Mucosa of descending colon (tissue), 3 donors: ENCODE measurements at regions of chr20 and their contacts with region 1.

Region 1: DNA sequence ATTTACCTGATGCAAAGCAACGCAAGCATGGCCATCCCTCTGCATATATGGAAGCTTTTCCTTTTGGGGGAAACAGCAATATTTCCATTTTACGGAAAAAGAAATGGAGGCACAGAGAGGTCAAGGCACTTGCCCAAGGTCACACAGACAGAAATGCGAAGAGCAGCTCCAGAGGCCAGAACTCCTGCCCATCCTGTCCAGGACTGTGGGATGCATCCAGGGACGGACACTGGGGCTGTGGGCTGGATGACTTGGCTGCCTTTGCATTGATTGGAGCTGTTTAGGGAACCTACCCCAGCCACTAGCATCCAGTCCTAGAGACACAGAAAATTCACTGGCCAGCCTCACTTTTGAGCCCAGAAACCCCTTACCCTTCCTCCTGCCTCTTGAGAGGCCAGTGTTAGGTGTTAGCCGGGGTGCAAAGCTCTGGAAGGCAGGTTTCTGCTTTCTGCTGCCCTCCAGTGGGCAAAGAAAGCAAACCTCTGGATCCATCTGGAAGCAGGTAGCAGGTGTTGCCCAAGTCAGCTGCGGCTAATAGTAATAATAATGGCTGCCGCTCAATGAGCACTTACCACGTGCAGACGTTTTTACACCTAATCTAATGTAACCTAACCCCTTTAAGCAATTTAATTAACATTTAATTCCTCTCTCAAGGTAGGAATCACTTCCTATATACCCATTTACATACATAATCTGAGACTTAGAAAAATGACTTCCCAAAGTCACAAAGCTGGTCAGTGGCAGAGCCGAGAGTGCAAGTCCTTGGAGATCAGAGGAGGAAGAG is 31.7 kb upstream of the CCN5 start:
- DNase-seq: peak in 2 of 3 donors; percentile 62 to 82
- ATAC-seq: peak; percentile 81
- H3K4me3 ChIP-seq: no peak overlapping the region
- H3K4me1 ChIP-seq: no peaks in the 10 kb centered on the region
- CTCF ChIP-seq: peak; percentile 68

Region 2: GRCh38 chr20:44733341-44734069 is 50.0 kb after region 1 on chr20:
- intact Hi-C with region 1: loop called (anchors 2 to 5 kb)
- DNase-seq: peak in 2 of 3 donors; percentile 72 to 76
- ATAC-seq: peak; percentile 62
- H3K4me3 ChIP-seq: no peak overlapping the region
- H3K4me1 ChIP-seq: no peaks in the 10 kb centered on the region
- CTCF ChIP-seq: peak; percentile 48

Region 3: DNA sequence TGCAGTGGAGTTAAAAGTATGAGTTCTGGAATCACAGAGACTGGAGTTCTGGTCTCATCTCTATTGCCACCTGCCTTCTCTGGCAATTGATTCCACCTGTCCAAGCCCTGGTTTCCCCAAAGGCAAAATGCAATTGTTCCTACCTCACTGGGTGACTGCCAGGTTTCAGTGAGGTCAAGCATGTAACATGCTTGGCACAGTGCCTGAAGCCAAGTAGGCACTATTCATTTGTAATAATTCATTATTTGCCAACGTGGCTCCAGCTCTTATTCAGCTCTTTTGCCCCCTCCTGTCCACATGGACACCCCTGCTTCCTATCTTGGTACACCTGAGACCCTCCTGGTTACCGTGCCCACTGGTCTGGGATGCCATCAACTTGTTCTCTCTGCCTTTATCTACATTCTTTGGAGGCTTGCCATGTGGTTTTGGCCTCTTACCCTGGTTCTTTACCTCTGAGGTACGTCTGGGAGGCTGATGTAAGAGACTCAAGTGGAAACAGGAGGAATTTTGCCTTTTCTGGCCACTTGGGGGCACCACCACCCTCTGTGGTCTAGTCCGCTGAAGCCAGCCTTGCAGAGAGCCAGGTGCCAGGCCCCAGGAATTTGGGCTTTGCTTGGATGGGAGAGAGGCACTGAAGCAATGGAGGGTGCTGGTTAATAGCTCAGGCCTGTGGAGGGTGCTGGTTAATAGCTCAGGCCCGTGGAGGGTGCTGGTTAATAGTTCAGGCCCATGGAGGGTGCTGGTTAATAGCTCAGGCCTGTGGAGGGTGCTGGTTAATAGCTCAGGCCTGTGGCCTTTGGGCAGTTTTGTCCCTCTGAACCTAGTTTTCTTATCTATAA is 63.9 kb after region 1 on chr20:
- intact Hi-C with region 1: no loop called
- DNase-seq: peak in 2 of 3 donors; percentile 75 to 92
- ATAC-seq: peak; percentile 82
- H3K4me3 ChIP-seq: no peak overlapping the region
- H3K4me1 ChIP-seq: peaks cover 8% of the 10 kb centered on the region
- CTCF ChIP-seq: peak; percentile 59

Region 4: DNA sequence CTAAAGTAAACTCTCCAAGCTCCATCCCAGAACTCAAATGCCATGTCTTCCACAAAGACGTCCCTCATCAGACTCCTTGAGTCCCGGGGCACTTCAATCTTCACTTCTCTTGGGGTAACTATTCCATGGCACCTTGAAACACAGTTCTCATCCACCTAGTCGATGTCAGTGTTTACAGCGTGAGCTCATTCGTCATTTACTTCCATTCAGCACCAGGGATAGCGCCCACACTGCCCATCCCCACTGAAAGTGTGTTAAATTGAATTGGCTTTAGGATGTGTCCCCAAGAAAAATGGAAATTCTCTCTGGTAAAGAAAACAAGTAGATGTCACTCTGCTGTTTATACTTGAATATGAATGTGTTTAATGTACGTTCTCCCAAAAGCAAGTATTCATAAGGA is 93.5 kb after region 1 on chr20:
- intact Hi-C with region 1: no loop called
- DNase-seq: peak in 1 of 3 donors; percentile 42
- ATAC-seq: no peak
- H3K4me3 ChIP-seq: no peak overlapping the region
- H3K4me1 ChIP-seq: no peaks in the 10 kb centered on the region
- CTCF ChIP-seq: no peak

Region 5: GRCh38 chr20:44861531-44862006 is 178.1 kb after region 1 on chr20:
- intact Hi-C with region 1: loop called (anchors 5 to 10 kb)
- DNase-seq: no peak
- ATAC-seq: peak; percentile 8
- H3K4me3 ChIP-seq: no peak overlapping the region
- H3K4me1 ChIP-seq: peaks cover 13% of the 10 kb centered on the region
- CTCF ChIP-seq: no peak

Region 6: DNA sequence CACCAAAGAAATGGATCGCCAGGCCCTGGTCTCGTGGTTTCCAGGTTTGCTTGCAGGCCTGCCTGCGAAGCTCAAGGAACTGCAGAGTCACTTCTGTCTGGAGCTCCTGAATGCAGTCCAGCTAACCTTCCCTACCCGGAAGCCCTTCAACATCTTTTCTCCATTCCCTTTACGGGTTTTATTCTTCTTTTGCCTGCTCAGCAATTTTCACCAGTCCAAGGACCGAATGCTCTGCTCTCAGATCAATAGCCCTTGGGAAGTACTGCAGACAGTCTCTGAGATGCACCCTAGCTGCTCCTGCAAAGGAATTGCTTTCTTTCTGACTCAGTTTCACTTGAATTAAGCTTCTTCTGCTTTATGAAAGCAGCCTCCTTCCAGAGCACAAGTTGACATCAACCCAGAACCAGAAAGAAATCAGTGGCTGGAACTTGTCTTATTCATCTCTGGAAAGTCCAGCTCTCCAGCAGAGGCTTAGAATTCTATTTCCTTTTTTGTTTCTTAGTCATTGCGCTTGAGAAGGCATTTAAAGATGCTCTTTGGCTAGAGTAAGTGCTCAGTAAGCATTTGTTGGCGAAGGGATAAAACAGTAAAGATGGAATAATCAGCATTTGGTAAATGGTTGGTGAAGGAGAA is 183.4 kb after region 1 on chr20:
- intact Hi-C with region 1: loop called (anchors 5 to 10 kb)
- DNase-seq: no peak
- ATAC-seq: no peak
- H3K4me3 ChIP-seq: no peak overlapping the region
- H3K4me1 ChIP-seq: no peaks in the 10 kb centered on the region
- CTCF ChIP-seq: no peak